A673 (cell line): ENCODE measurements at regions of chr10 and their contacts with region 1.

Region 1: DNA sequence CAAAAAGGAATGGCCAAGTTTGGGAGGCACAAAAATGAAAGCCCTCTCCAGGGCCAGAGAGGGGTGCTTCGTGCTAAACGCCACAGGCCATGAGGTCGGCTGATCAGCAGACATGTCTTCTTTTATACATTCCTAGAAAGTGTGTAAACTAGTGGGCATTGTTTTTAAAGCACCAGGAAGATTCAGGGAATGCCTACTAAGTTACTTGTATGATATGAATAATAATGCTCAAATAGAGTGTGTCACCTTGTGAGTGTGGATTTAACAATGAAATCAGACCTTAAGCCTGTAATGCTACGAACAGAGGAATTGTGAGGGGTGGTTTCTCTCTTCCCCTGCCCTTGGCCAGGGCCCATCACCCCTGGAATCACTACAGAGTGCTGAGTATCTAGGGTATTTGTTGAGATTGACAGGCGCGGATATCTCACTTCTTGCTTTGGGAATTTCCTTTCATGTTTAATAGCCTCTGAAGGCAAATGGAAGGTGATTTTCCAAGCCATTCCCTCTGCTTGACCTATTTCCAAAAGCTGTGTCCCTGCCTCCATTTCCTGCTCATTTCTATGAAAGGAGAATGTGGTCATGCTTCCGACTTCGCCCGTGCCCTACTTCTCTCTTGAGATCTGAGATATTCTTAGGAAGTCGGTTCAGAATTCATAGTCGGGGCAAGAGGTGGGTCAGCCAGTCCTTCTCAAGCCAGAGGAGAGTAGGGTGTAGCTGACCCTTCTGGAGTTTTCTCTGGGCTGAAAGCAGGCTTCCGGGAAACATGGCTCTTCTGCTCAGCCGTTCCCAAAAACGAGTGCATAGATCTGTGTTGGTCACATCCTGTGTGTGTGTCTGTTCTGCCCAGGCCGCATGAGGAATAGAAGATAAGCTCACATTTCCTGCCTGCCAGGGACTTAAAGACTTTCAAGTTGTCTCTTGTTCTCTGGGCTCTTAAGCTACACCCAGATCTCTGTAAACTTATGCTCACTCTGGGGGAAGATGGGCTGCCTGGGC is 167.8 kb upstream of the ITGB1 start:
- DNase-seq: no peak
- H3K4me3 ChIP-seq: no peak overlapping the region
- H3K27ac ChIP-seq: no peak overlapping the region
- H3K4me1 ChIP-seq: no peaks in the 10 kb centered on the region
- H3K27me3 ChIP-seq: no peaks in the 10 kb centered on the region
- CTCF ChIP-seq: no peak

Region 2: GRCh38 chr10:31526681-31527080 is 1599.1 kb before region 1 on chr10:
- CTCF ChIA-PET with region 1: no interaction called
- POLR2A ChIA-PET with region 1: no interaction called
- intact Hi-C with region 1: no loop called
- DNase-seq: no peak
- H3K4me3 ChIP-seq: no peak overlapping the region
- H3K27ac ChIP-seq: no peak overlapping the region
- H3K4me1 ChIP-seq: no peaks in the 10 kb centered on the region
- H3K27me3 ChIP-seq: no peaks in the 10 kb centered on the region
- CTCF ChIP-seq: no peak

Region 3: GRCh38 chr10:32958085-32959005 is 167.5 kb before region 1 on chr10 and contains the start of gene ITGB1:
- CTCF ChIA-PET with region 1: no interaction called
- POLR2A ChIA-PET with region 1: no interaction called
- intact Hi-C with region 1: no loop called
- DNase-seq: peak; percentile 98
- H3K4me3 ChIP-seq: peak within 1 kb of the TSS; percentile 93
- H3K27ac ChIP-seq: peak within 1 kb of the TSS; percentile 99
- H3K4me1 ChIP-seq: peaks cover 45% of the 10 kb centered on the region
- H3K27me3 ChIP-seq: no peaks in the 10 kb centered on the region
- CTCF ChIP-seq: no peak
- total RNA-seq, gene ITGB1: 276 and 282 TPM in 2 replicates

Region 4: GRCh38 chr10:33107953-33108352 is 17.9 kb before region 1 on chr10:
- CTCF ChIA-PET with region 1: no interaction called
- POLR2A ChIA-PET with region 1: interaction called, 24 read pairs
- intact Hi-C with region 1: no loop called
- DNase-seq: no peak
- H3K4me3 ChIP-seq: no peak overlapping the region
- H3K27ac ChIP-seq: no peak overlapping the region
- H3K4me1 ChIP-seq: peaks cover 18% of the 10 kb centered on the region
- H3K27me3 ChIP-seq: no peaks in the 10 kb centered on the region
- CTCF ChIP-seq: no peak